ENCODE measurements at regions of chr7 and their contacts with region 1.

Region 1: DNA sequence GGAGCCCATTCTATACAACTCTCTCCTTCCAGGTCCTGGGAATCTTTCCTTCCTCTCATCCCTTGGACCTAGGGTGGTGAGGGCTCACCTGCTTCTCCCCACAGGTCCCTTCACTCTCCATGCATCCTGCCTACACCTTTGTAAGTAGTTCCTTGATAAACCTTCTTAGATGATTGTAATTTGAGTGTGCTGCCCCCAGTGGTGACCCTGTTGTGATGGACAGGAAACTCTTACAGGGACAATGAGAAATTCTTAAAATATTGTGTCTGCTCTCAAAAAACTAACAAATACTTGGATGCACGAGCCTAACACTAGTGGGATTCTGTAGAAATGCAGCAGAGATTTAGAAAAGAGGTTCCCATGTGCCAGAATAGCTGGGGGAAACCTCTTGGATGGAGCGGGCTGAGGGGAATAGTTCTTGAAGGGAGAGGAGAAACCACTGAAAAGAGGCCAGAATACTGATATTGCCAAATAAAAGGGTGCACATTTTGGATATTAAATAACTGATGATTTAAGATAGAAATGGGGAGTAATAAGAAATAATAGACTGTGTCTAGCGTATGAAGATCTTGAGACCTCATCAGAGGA is 6.7 kb upstream of the PAXIP1 start:
- DNase-seq: peak; percentile 18
- ATAC-seq: peak; percentile 70
- H3K4me3 ChIP-seq: no peak overlapping the region
- H3K27ac ChIP-seq: no peak overlapping the region
- H3K4me1 ChIP-seq: peaks cover 5% of the 10 kb centered on the region
- H3K27me3 ChIP-seq: 0 out of 5 replicates have a peak, but pooled peaks cover 0 to 3% of the 10 kb centered on the region in 2 experiments
- CTCF ChIP-seq: peak; percentile 40
- EP300 ChIP-seq: no peak
- POLR2A ChIP-seq: no peak
- RAD21 ChIP-seq: no peak

Region 2: DNA sequence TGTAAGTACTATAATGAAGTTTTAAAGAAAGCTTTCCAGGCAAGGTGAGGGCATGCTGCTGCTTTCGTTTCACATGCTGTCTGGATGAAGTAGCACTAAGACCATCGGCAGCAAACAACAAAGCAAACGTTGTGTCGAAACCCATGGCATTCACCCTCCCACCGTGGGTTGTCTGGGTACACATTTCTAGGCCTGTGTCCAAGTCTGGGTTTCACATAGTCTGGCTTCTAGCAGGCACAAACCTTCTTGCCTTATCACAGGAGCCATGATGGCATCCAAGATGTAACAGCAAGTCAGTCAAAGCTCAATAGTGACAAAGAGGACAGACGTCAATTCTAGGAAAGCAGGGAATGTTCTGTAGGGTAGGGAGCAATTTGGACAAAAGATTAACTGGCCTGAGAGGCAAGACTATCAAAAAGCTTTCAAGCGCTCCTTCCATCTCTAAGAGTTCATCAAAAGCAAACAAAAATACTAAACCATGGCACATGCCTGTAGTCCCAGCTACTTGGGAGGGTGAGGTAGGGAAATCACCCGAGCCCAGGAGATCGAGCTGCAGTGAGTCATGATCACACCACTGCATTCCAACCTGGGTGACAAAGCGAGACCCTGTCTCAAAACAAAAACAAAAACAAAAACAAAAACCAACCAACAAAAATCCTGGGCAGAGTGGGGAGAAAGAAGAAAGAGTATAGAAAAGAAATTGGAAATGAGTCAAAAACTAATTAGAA is 49.4 kb before region 1 on chr7:
- CTCF ChIA-PET with region 1: no interaction called
- POLR2A ChIA-PET with region 1: no interaction called
- in situ Hi-C with region 1: no loop called
- intact Hi-C with region 1: loop called (anchors 2 kb)
- DNase-seq: peak; percentile 36
- ATAC-seq: no peak; the same call in 2 of the 3 replicates
- H3K4me3 ChIP-seq: no peak overlapping the region
- H3K27ac ChIP-seq: no peak overlapping the region
- H3K4me1 ChIP-seq: no peaks in the 10 kb centered on the region
- H3K27me3 ChIP-seq: no peaks in the 10 kb centered on the region
- CTCF ChIP-seq: no peak
- EP300 ChIP-seq: no peak
- POLR2A ChIP-seq: no peak
- RAD21 ChIP-seq: no peak

Measured in HepG2 (cell line).